Right ventricle myocardium inferior (tissue), 1 donor: ENCODE measurements at regions of chr14 and their contacts with region 1.

Region 1: GRCh38 chr14:64671591-64671990 is 32.6 kb upstream of the PLEKHG3 start:
- DNase-seq: no peak
- ATAC-seq: peak; percentile 37

Region 2: DNA sequence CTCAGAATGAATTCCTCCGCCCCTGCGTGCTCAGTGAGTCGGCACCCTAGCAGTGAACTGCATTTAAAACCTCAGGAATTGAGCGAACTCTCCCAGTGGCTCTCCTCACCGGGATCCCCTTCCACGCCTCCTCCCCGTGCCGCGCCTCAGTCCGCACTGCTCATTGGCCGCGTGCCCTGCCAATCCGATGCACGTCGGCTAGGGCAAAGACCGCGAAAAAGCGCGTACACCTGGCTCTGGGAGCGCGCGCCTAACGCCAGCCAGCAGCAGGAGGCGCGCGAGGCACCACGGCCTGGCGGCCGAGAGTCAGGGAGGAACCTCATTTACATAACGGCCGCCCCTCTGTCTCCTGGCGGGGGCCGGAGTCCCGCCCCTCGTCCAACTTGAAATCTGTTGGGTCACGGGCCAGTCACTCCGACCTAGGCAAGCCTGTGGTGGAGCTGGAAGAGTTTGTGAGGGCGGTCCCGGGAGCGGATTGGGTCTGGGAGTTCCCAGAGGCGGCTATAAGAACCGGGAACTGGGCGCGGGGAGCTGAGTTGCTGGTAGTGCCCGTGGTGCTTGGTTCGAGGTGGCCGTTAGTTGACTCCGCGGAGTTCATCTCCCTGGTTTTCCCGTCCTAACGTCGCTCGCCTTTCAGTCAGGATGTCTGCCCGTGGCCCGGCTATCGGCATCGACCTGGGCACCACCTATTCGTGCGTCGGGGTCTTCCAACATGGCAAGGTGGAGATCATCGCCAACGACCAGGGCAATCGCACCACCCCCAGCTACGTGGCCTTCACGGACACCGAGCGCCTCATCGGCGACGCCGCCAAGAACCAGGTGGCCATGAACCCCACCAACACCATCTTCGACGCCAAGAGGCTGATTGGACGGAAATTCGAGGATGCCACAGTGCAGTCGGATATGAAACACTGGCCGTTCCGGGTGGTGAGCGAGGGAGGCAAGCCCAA is 131.1 kb before region 1 on chr14 and contains the start of gene HSPA2:
- intact Hi-C with region 1: no loop called
- DNase-seq: peak; percentile 99
- ATAC-seq: peak; percentile 98
- total RNA-seq, gene HSPA2: 15.2 TPM

Region 3: GRCh38 chr14:64726585-64726890 is 54.9 kb after region 1 on chr14:
- intact Hi-C with region 1: loop called (anchors 10 kb)
- DNase-seq: no peak
- ATAC-seq: no peak

Region 4: GRCh38 chr14:64764641-64765520 is 93.3 kb after region 1 on chr14:
- intact Hi-C with region 1: loop called (anchors 1 kb)
- DNase-seq: peak; percentile 86
- ATAC-seq: peak; percentile 63

Region 5: DNA sequence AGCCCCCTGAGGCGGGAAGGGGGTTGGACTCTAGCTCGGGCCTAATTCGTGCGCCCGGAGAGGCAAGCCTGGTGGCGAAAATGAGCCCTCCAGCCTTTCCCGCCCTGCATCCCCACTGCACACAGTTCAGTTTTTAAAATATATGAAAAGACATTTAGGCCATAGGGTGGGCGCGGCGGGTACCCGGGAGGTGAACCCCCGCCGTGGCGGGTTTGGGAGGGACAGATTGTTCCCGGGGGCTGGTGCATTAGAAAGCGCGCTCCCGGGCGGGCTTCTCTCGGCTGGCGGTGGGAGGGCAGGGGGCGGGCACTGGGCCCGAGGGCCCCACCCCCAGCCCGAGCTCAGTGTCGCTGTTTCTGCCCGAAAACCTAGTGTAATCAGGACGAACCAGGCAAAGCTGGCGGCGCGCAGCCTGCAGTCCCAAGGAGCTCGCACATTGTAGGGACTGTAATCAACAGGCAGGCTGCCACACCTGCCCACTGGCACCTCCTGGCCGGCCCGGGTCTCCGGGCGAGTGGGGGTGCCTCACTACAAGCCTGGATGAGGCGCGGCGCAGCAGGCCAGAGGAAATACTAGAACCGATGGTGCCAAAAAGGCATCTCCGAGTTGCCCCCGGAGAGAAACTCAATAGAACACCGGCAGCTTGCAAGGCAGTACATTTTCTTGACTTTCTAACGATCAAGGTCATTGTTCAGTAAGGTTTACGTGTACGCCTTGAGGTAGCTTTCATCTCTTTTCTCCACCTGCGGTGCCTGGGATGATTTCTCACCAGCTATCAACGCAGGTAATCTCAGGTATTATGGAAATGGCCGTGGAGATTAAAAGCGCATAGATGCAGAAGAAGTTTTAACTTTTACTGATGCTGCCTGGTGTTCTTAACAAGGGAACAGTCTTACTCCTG is 208.9 kb after region 1 on chr14:
- intact Hi-C with region 1: loop called (anchors 10 kb)
- DNase-seq: peak; percentile 66
- ATAC-seq: peak; percentile 64

Region 6: DNA sequence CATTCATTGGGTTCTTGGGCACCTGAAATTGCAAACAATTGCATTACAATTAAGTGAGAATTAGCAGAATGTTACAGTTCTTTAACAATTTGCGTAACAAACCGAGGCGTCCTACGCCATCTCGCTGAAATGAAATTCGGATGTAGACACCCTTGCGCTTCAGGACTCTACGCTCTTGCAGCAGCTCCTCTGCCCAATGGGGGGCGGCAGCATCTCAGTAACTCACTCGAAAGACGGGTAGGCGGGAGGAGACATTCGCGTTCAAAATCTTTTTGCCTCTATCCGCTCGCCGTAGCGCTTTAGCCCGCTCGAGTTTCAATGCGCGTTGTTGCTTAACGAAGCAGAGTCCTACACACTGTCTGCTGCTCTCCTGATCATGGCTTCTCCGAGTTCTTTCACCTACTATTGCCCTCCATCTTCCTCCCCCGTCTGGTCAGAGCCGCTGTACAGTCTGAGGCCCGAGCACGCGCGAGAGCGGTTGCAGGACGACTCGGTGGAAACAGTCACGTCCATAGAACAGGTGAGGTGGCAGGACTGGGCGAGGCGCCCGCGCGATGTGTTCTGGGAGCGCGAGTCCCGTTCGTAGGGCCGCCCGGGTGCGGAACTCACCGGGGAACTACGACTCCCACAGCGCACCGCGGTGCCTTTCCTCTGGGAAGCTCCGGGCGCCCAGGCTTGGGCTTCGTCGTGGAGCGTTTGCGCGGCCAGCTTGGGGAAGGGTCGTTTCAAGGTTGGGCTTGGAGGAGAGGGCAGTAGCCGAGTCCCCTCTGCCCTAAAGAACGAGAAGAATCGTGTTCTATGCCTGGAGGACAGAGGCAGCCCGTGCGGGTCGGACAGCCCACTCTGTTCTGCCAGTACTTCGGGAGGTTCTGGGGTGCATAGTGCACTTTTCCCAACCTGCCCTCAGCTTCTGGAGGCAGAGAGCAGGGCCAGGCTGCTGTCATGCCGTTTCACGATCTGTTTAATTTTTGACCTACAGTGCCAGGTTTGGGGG is 315.3 kb after region 1 on chr14 and contains the start of gene FNTB:
- intact Hi-C with region 1: loop called (anchors 10 kb)
- DNase-seq: peak; percentile 99
- ATAC-seq: peak; percentile 98
- total RNA-seq, gene FNTB: 17.1 TPM